Ovary (tissue), 10 donors: ENCODE measurements at regions of chr12 and their contacts with region 1.

Region 1: DNA sequence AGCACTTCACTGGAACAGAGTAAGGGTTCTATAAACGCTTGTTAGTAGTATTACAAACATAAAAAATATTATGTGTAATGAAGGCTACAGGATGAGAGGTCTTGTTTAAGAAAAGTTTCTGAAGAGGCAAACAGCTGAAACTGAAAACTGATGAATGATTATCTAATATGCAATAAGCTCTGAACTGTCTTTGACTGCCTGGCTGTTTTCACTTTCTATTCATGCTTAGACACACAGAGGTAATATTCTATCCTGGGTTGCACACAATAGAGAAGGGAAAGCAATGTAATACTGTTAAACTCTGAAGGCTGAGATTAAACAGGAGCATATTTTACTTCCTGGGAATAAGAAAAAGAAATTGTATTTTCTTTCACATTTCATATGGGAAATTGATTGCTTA is 251.3 kb downstream of the ALX1 start:
- DNase-seq: no peak
- H3K4me3 ChIP-seq: no peak overlapping the region
- H3K27ac ChIP-seq: no peak overlapping the region
- H3K4me1 ChIP-seq: no peaks in the 10 kb centered on the region
- H3K27me3 ChIP-seq: no peaks in the 10 kb centered on the region
- CTCF ChIP-seq: no peak
- EP300 ChIP-seq: no peak
- POLR2A ChIP-seq: no peak

Region 2: DNA sequence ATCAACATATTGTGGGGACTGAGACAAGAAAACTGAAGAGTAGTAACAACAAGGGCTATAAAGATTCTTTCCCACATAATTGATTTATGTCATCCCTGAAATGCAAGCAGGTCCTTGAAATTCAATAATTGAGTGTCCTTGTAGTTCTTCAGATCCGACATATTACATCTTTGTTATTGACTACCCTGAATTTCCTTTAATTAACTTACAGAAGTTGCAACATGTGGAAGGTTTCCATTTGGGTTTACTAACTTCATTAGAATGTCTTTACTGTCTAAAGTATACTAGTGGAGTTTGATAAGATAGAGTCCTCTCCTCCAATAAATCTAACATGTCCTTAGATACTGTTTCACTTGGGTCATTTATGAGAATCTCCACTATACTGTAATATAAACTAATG is 1570.6 kb before region 1 on chr12:
- intact Hi-C with region 1: loop called in 1 of 4 experiments (anchors 5 kb)
- DNase-seq: no peak
- H3K4me3 ChIP-seq: no peak overlapping the region
- H3K27ac ChIP-seq: no peak overlapping the region
- H3K4me1 ChIP-seq: no peaks in the 10 kb centered on the region
- H3K27me3 ChIP-seq: no peaks in the 10 kb centered on the region
- CTCF ChIP-seq: no peak
- EP300 ChIP-seq: no peak
- POLR2A ChIP-seq: no peak